BJ (cell line): ENCODE measurements at regions of chr17 and their contacts with region 1.

Region 1: GRCh38 chr17:56298846-56299245 is 145.6 kb downstream of the ANKFN1 start:
- DNase-seq: no peak
- H3K4me3 ChIP-seq: no peak overlapping the region
- H3K27me3 ChIP-seq: no peaks in the 10 kb centered on the region
- CTCF ChIP-seq: no peak

Region 2: GRCh38 chr17:56319517-56319916 is 20.7 kb after region 1 on chr17:
- CTCF ChIA-PET with region 1: interaction called, 11 read pairs
- POLR2A ChIA-PET with region 1: no interaction called
- DNase-seq: peak; percentile 11
- H3K4me3 ChIP-seq: no peak overlapping the region
- H3K27me3 ChIP-seq: no peaks in the 10 kb centered on the region
- CTCF ChIP-seq: peak; percentile 58

Region 3: GRCh38 chr17:56699186-56699895 is 400.5 kb after region 1 on chr17:
- CTCF ChIA-PET with region 1: no interaction called
- POLR2A ChIA-PET with region 1: no interaction called
- DNase-seq: peak; percentile 92
- H3K4me3 ChIP-seq: no peak overlapping the region
- H3K27me3 ChIP-seq: no peaks in the 10 kb centered on the region
- CTCF ChIP-seq: no peak